Lower lobe of right lung (tissue), 2 donors: ENCODE measurements at regions of chr1 and their contacts with region 1.

Region 1: GRCh38 chr1:157156058-157156541 is 17.9 kb upstream of the ETV3 start:
- DNase-seq: peak; percentile 83
- ATAC-seq: peak; percentile 84 to 86
- H3K4me3 ChIP-seq: peak overlapping the region; percentile 14
- H3K27ac ChIP-seq: no peak overlapping the region
- H3K4me1 ChIP-seq: peaks cover 32% of the 10 kb centered on the region
- H3K27me3 ChIP-seq: no peaks in the 10 kb centered on the region
- CTCF ChIP-seq: peak; percentile 97

Region 2: GRCh38 chr1:156896490-156897033 is 259.5 kb before region 1 on chr1:
- intact Hi-C with region 1: no loop called
- DNase-seq: peak; percentile 45
- ATAC-seq: peak in 1 of 2 donors; percentile 7
- H3K4me3 ChIP-seq: peak overlapping the region; percentile 63
- H3K27ac ChIP-seq: peak overlapping the region; percentile 71
- H3K4me1 ChIP-seq: peaks cover 70% of the 10 kb centered on the region
- H3K27me3 ChIP-seq: peaks cover 17% of the 10 kb centered on the region
- CTCF ChIP-seq: no peak

Region 3: GRCh38 chr1:157085421-157085820 is 70.7 kb before region 1 on chr1:
- intact Hi-C with region 1: loop called (anchors 5 kb)
- DNase-seq: no peak
- ATAC-seq: peak in 1 of 2 donors; percentile 34
- H3K4me3 ChIP-seq: no peak overlapping the region
- H3K27ac ChIP-seq: no peak overlapping the region
- H3K4me1 ChIP-seq: no peaks in the 10 kb centered on the region
- H3K27me3 ChIP-seq: no peaks in the 10 kb centered on the region
- CTCF ChIP-seq: no peak

Region 4: DNA sequence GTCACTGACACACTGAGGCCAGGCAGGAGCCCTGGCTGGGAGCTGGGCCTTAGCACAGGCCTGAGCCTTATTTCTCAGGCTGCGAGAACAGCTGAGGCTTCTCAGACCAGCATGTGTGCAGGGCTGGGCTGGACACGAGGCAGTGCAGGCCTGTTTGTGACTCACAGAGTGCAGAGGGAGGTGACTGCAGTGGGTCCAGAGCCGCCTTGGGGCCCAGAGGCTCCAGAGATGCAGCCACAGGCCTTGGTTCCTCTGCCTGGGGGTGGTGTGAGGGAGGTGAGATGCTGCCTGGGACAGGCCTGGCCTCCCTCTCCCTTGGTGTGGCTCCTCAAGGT is 43.3 kb after region 1 on chr1:
- intact Hi-C with region 1: no loop called
- DNase-seq: no peak
- ATAC-seq: no peak
- H3K4me3 ChIP-seq: no peak overlapping the region
- H3K27ac ChIP-seq: peak overlapping the region; percentile 19
- H3K4me1 ChIP-seq: no peaks in the 10 kb centered on the region
- H3K27me3 ChIP-seq: peaks cover 25% of the 10 kb centered on the region
- CTCF ChIP-seq: no peak

Region 5: DNA sequence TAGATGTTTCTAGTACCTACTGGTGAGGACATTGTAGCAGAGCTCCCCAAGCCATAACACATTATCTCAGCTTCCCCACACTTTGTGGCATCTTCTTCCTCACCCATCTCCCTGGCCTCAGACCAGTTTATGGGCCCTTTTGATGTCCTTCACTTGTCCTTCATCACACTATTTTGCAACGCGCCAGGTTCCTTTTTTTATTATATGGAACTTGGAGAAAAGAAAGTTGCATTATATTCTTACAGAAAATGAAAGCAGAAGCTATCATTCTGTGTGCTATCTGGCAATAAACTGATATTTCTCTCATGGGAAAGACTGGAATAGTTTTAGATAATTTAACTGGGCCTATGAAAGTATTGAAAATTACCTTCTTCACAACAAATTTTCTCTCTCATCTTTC is 179.0 kb after region 1 on chr1:
- intact Hi-C with region 1: no loop called
- DNase-seq: no peak
- ATAC-seq: no peak
- H3K4me3 ChIP-seq: no peak overlapping the region
- H3K27ac ChIP-seq: no peak overlapping the region
- H3K4me1 ChIP-seq: no peaks in the 10 kb centered on the region
- H3K27me3 ChIP-seq: no peaks in the 10 kb centered on the region
- CTCF ChIP-seq: no peak